GM13976 (cell line): ENCODE measurements at regions of chr6 and their contacts with region 1.

Region 1: DNA sequence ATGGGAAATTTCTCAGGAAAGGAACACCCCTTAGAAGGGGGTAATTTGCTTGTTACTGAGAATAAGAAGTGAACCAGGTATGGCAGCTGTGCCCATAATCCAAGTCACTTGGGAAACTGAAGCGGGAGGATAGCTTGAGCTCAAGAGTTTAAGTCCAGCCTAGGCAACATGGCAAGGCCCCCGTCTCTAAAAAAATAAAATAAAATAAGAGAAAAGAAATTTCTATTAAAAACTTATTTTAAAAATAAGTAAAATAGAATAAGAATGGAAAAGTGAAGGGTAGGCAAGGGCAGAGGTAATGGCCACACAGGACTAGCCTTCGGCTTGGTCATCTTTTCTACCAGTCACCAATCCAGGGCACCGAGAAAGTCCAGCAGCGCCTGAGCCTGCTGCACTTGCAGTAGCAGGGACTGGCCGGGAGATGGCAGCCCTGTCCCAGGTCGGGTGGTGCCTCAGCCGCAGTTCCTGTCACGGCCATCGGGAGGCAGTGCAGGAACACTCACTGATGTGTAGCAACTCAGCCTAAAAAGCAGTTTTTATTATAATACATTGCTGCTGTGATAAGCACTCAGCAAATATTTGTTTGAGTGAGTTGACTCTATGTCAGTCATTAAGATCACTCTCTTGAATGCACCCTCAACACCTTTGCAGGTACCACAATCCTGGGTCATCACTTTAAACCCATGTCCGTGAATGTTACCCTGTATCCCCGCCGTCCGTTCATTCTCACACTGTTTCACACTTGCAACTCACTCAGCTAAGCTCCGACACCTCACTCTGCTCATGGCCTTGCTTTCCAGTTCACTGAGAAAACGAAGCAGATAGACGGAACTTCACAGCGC is 23.2 kb upstream of the GCM1 start:
- DNase-seq: peak; percentile 82
- CTCF ChIP-seq: peak; percentile 100

Region 2: DNA sequence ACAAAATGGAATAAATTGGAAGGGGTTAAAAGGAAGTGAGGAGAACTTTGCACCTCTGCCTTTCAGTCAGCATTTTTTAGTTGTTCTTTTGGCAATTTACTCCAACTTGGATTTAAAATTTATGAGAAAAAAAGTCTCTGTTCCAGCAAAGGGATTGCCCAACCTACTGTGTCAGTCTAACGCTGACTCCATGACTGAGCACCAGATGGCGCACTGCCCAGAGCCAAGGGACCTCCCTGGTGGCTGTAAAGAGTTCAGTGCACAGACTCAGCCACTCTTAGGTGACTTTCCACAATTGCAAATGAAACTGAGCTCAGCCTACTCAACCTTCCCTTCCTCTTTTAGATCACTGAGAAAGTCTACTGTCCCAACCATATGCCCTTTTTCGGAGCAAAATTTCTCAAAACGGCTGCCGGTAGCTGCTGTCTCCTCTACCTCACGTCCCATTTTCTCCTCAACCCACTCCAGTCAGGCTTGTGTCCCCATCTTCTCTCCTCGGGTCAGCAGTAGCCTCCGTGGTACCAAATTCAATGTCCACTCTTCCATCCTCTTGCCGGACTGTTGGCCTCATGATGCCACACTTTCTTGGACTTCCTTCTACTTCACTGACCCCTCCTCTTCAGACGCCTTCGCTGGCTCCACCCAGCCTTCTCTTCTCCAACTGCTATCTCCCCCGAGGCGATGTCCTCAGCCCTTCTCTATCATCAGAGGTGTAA is 447.3 kb before region 1 on chr6:
- in situ Hi-C with region 1: no loop called
- DNase-seq: peak; percentile 77
- CTCF ChIP-seq: peak; percentile 91

Region 3: GRCh38 chr6:53437557-53438202 is 265.9 kb after region 1 on chr6:
- in situ Hi-C with region 1: loop called (anchors 10 kb)
- DNase-seq: peak; percentile 39
- CTCF ChIP-seq: peak; percentile 45

Region 4: DNA sequence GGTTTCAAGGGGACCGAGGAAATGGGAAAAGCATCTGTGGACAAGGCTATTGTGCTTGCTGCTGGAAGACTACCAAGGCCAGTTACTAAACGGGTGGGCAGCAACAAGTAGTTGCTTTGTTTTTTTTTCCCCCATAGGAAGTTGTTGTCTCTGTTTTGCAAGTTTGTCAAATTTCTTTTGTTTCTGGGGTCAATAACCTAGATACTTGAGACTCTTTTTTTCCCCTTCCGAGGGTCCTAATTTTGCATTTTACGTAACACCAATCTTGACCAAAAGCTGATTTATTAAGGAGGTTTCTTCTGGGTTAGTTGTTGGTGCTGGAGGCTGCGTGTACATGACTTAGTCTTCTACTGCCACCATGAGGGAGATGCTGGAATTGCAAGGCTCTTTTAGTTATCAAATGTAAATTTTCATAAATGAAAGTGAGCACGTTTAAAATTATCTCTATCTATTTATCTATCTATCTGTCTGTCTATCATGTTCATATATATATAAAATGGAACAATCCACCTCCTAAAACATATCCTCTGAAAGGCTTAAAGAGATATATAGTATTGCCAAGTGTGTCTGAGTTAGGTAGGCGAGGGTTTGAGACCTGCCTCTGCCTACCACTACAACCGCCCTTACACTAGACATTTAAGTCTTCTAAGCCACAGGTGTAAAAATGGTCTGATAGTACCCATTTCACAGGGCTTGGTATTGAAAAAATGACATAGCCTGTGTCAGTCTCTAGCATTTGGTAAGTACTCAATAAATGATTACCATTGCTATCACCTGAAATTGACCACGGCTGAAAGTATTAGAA is 312.9 kb after region 1 on chr6:
- in situ Hi-C with region 1: loop called (anchors 5 kb)
- DNase-seq: peak; percentile 21
- CTCF ChIP-seq: peak; percentile 80

Region 5: DNA sequence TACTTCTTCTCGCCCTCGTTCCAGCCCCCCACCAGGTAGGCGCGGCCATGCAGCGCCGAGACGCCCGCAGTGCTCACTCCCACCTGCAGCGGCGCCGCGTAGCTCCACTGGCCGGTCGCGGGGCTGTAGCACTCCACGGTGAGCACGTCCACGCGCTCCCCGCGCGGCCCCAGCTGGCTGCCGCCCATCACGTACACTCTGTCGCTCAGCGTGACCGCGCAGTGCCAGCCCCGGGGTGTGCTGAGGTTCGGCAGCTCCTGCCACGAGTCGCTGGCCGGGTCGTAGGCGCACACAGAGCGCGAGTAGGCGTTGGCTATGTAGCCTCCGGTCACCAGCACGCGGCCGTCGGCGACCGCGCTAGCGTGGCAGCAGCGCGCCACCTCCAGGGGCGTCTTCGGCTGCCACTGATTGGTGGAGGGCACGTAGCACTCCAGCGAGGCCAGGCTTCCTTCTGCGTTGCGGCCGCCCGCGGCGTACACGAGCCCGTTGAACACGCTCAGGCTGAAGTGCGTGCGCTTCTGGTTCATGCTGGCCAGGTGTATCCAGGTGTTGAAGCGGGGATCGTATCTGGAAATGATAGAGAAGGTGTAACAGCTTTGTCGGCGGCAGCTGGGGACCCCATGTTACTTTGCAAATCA is 480.1 kb after region 1 on chr6:
- in situ Hi-C with region 1: loop called (anchors 25 kb)
- DNase-seq: peak; percentile 70
- CTCF ChIP-seq: peak; percentile 46

Region 6: DNA sequence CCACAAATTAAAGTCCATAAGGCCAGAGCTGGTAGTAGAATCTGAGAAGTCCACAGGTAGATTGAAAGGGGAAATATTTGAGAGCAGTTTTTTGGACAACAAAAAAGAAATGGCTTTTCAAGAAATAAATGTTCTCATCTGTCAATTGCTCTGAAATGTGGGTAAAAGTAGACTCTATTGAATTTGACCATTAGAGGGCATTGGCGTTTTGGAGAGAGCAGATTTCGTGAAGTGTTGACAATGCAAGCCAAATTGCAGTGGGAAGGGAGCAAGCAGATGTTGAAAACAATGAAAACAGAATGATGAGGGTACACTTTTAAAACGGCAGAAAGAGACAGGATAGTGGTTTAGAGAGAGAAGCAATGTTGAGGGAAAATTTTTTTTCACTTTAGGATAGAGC is 1525.6 kb after region 1 on chr6:
- in situ Hi-C with region 1: no loop called
- DNase-seq: no peak
- CTCF ChIP-seq: peak; percentile 15